IMR-90 (cell line): ENCODE measurements at regions of chr6 and their contacts with region 1.

Region 1: GRCh38 chr6:38493931-38494547 is 145.7 kb downstream of the BTBD9 start:
- DNase-seq: peak; percentile 81
- ATAC-seq: peak; percentile 27; the same call in 1 of the 2 replicates
- H3K4me3 ChIP-seq: no peak overlapping the region
- H3K27ac ChIP-seq: no peak overlapping the region
- H3K4me1 ChIP-seq: no peaks in the 10 kb centered on the region
- H3K27me3 ChIP-seq: no peaks in the 10 kb centered on the region
- CTCF ChIP-seq: peak; percentile 90
- POLR2A ChIP-seq: no peak
- RAD21 ChIP-seq: peak; percentile 96

Region 2: GRCh38 chr6:37483917-37484785 is 1009.9 kb before region 1 on chr6:
- CTCF ChIA-PET with region 1: no interaction called
- POLR2A ChIA-PET with region 1: no interaction called
- dilution Hi-C with region 1: no loop called
- in situ Hi-C with region 1: no loop called
- intact Hi-C with region 1: loop called (anchors 5 kb)
- DNase-seq: peak; percentile 29
- ATAC-seq: peak; percentile 94
- H3K4me3 ChIP-seq: no peak overlapping the region
- H3K27ac ChIP-seq: no peak overlapping the region
- H3K4me1 ChIP-seq: no peaks in the 10 kb centered on the region
- H3K27me3 ChIP-seq: no peaks in the 10 kb centered on the region
- CTCF ChIP-seq: peak; percentile 84
- POLR2A ChIP-seq: no peak
- RAD21 ChIP-seq: peak; percentile 89

Region 3: DNA sequence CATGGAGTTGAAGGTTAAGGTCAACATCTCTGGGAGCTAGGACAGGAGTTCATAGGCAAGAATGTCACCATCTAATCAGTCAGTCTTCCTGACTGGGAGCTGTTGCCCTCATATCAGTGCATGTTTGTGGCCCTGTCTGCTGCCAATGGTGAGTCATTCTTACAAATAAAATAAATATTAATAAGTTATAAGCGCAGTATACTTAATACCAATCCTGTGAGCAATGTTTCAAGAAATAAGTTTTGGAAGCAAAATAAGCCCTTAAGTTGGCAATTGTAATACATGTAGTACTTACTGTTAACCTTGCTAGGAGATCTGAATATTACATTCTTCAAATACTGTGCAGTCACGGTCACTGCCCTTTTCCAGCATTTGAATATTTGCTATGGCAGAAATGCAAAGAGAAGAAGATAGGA is 776.2 kb before region 1 on chr6:
- CTCF ChIA-PET with region 1: interaction called, 3 read pairs
- POLR2A ChIA-PET with region 1: no interaction called
- dilution Hi-C with region 1: no loop called
- in situ Hi-C with region 1: no loop called
- intact Hi-C with region 1: loop called (anchors 5 kb)
- DNase-seq: peak; percentile 83
- ATAC-seq: peak; percentile 70
- H3K4me3 ChIP-seq: no peak overlapping the region
- H3K27ac ChIP-seq: peak overlapping the region; percentile 21; the same call in 1 of the 2 replicates
- H3K4me1 ChIP-seq: peaks cover 27% of the 10 kb centered on the region
- H3K27me3 ChIP-seq: no peaks in the 10 kb centered on the region
- CTCF ChIP-seq: no peak
- POLR2A ChIP-seq: no peak
- RAD21 ChIP-seq: no peak

Region 4: DNA sequence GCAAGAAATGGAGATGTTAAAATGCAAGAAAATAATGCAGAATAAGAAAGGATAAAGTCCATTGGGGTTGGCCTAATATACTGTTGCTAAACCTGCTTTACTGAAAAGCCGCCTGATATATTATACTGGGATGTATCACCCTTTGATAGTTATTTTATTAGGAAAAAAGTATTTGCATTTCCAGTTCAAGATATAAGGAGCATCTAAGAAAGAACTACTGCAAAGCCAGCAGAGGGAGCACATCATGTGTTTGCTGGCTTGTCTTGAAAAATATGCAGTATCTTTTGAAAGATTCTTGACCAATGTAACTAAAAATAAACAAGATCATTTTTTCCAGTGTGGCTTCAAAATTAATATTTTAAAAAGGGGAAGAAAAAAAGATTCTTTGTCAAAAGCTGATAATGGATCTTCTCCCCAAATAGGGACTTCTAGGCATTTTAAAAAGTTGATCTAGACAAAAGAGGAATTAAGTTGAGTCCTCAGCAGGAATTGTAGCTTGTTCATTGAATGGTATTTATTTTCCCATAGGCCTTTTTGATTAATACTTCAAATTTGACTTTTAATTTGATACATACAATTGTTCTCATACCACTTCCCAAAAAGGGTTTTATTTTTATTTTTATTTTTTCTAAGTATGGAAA is 459.6 kb before region 1 on chr6:
- CTCF ChIA-PET with region 1: interaction called, 18 read pairs
- POLR2A ChIA-PET with region 1: no interaction called
- dilution Hi-C with region 1: no loop called
- in situ Hi-C with region 1: loop called (anchors 5 kb)
- intact Hi-C with region 1: loop called (anchors 1 kb)
- DNase-seq: peak; percentile 79
- ATAC-seq: peak; percentile 71
- H3K4me3 ChIP-seq: no peak overlapping the region
- H3K27ac ChIP-seq: no peak overlapping the region
- H3K4me1 ChIP-seq: peaks cover 6% of the 10 kb centered on the region
- H3K27me3 ChIP-seq: no peaks in the 10 kb centered on the region
- CTCF ChIP-seq: peak; percentile 66
- POLR2A ChIP-seq: no peak
- RAD21 ChIP-seq: peak; percentile 61

Region 5: GRCh38 chr6:38100380-38100779 is 393.7 kb before region 1 on chr6:
- CTCF ChIA-PET with region 1: no interaction called
- POLR2A ChIA-PET with region 1: no interaction called
- dilution Hi-C with region 1: no loop called
- in situ Hi-C with region 1: no loop called
- intact Hi-C with region 1: no loop called
- DNase-seq: no peak
- ATAC-seq: no peak
- H3K4me3 ChIP-seq: no peak overlapping the region
- H3K27ac ChIP-seq: no peak overlapping the region
- H3K4me1 ChIP-seq: peaks cover 2% of the 10 kb centered on the region
- H3K27me3 ChIP-seq: no peaks in the 10 kb centered on the region
- CTCF ChIP-seq: no peak
- POLR2A ChIP-seq: no peak
- RAD21 ChIP-seq: no peak

Region 6: GRCh38 chr6:38671885-38672467 is 177.9 kb after region 1 on chr6:
- CTCF ChIA-PET with region 1: no interaction called
- POLR2A ChIA-PET with region 1: no interaction called
- dilution Hi-C with region 1: no loop called
- in situ Hi-C with region 1: no loop called
- intact Hi-C with region 1: loop called (anchors 5 kb)
- DNase-seq: peak; percentile 76
- ATAC-seq: peak; percentile 91
- H3K4me3 ChIP-seq: no peak overlapping the region
- H3K27ac ChIP-seq: no peak overlapping the region
- H3K4me1 ChIP-seq: no peaks in the 10 kb centered on the region
- H3K27me3 ChIP-seq: no peaks in the 10 kb centered on the region
- CTCF ChIP-seq: peak; percentile 80
- POLR2A ChIP-seq: no peak
- RAD21 ChIP-seq: peak; percentile 78